Endothelial cell of umbilical vein (primary cell): ENCODE measurements at regions of chr13 and their contacts with region 1.

Region 1: DNA sequence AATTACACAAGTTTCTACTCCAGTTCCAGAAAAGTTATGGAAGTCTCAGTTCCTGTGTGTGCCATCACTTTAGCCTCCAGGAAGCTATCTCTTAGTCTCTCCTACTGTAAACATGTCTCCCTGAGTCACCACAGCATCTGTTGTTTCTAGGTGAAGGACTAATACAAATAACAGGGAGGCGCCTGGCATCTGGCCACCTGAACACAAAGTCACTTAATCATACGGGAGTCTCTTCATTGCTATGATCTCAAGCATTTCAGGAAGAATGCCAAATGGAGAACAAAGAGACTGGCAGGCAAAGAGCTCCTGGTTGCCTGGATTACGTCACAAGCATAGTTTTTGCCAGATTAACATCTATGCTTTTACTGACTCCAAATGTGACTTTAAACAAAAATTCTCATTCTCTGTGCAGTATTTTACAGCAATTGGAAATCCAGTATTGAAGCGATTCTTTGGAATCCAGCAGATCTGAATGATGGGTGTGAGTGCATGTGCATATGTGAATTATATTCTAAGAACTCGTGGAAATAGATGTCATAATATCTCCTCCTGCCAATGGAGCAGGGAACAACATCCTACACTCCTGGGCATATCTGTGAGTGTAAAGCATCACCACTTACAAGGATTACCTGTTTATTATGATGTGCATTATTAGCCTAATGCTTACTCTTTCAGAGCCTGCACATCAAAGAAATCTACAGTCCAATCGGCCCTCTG is 572.8 kb downstream of the PCDH9 start:
- DNase-seq: peak; percentile 97
- H3K4me3 ChIP-seq: no peak overlapping the region
- H3K27ac ChIP-seq: peak overlapping the region; percentile 92
- H3K4me1 ChIP-seq: peaks cover 32% of the 10 kb centered on the region
- H3K27me3 ChIP-seq: no peaks in the 10 kb centered on the region
- CTCF ChIP-seq: no peak
- POLR2A ChIP-seq: peak; percentile 31

Region 2: DNA sequence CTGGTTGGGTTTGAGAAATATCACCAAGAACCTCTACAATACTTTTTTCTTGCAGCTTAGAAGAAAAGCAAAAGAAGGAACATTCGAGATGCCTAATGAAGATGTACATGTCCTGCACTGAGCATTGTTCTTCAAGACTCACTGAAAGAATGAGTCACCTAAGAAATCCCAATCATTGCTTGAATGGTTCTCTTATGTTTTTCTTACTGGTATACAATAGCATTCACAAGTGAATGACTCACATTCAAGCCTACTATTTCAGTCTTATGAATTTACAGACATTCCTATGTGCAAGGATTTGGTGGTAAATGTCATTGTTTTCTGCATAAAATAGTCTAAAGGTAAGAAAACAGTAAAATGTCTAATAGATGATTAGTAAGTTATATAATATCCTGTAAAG is 21.8 kb before region 1 on chr13:
- CTCF ChIA-PET with region 1: no interaction called
- POLR2A ChIA-PET with region 1: no interaction called
- dilution Hi-C with region 1: no loop called
- intact Hi-C with region 1: loop called (anchors 1 kb)
- DNase-seq: peak; percentile 89
- H3K4me3 ChIP-seq: no peak overlapping the region
- H3K27ac ChIP-seq: peak overlapping the region; percentile 70
- H3K4me1 ChIP-seq: peaks cover 18% of the 10 kb centered on the region
- H3K27me3 ChIP-seq: no peaks in the 10 kb centered on the region
- CTCF ChIP-seq: no peak
- POLR2A ChIP-seq: no peak

Region 3: GRCh38 chr13:66644855-66645460 is 12.4 kb before region 1 on chr13:
- CTCF ChIA-PET with region 1: interaction called, 12 read pairs
- POLR2A ChIA-PET with region 1: interaction called, 4 read pairs
- dilution Hi-C with region 1: no loop called
- intact Hi-C with region 1: no loop called
- DNase-seq: no peak
- H3K4me3 ChIP-seq: no peak overlapping the region
- H3K27ac ChIP-seq: no peak overlapping the region
- H3K4me1 ChIP-seq: no peaks in the 10 kb centered on the region
- H3K27me3 ChIP-seq: no peaks in the 10 kb centered on the region
- CTCF ChIP-seq: no peak
- POLR2A ChIP-seq: no peak

Region 4: DNA sequence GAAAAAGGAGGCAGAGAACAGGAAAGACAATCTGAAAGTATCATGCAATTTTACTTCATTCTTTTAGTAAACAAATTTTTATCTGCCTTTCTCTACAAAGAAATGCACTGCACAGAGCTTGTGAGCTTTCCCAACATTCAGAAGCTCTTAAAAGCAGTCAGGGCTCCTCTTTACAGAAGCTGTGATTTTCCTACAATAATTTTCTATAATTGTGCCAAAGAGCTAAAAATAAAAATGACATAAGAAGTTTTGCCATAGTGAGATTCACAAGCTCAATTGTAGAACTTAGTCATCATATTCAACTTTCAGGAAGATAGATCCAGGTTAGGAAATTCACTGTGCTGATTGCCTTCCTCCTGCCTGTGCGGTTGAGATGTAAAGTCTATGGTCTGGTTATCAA is 231.4 kb after region 1 on chr13:
- CTCF ChIA-PET with region 1: no interaction called
- POLR2A ChIA-PET with region 1: no interaction called
- dilution Hi-C with region 1: no loop called
- intact Hi-C with region 1: no loop called
- DNase-seq: no peak
- H3K4me3 ChIP-seq: no peak overlapping the region
- H3K27ac ChIP-seq: no peak overlapping the region
- H3K4me1 ChIP-seq: no peaks in the 10 kb centered on the region
- H3K27me3 ChIP-seq: no peaks in the 10 kb centered on the region
- CTCF ChIP-seq: no peak
- POLR2A ChIP-seq: no peak

Region 5: GRCh38 chr13:66958611-66959010 is 301.3 kb after region 1 on chr13:
- CTCF ChIA-PET with region 1: no interaction called
- POLR2A ChIA-PET with region 1: no interaction called
- dilution Hi-C with region 1: no loop called
- intact Hi-C with region 1: no loop called
- DNase-seq: no peak
- H3K4me3 ChIP-seq: no peak overlapping the region
- H3K27ac ChIP-seq: no peak overlapping the region
- H3K4me1 ChIP-seq: no peaks in the 10 kb centered on the region
- H3K27me3 ChIP-seq: no peaks in the 10 kb centered on the region
- CTCF ChIP-seq: no peak
- POLR2A ChIP-seq: no peak